AG04449 (cell line): ENCODE measurements at regions of chr2 and their contacts with region 1.

Region 1: GRCh38 chr2:151437630-151438029 is 27.9 kb downstream of the RIF1 start:
- DNase-seq: no peak
- H3K4me3 ChIP-seq: no peak overlapping the region
- CTCF ChIP-seq: no peak

Region 2: GRCh38 chr2:151230627-151231140 is 206.9 kb before region 1 on chr2:
- CTCF ChIA-PET with region 1: no interaction called
- POLR2A ChIA-PET with region 1: no interaction called
- DNase-seq: no peak
- H3K4me3 ChIP-seq: no peak overlapping the region
- CTCF ChIP-seq: no peak

Region 3: GRCh38 chr2:151261231-151261976 is 176.2 kb before region 1 on chr2 and contains the start of gene RBM43:
- CTCF ChIA-PET with region 1: interaction called, 14 read pairs
- POLR2A ChIA-PET with region 1: no interaction called
- DNase-seq: peak; percentile 44
- H3K4me3 ChIP-seq: peak within 1 kb of the TSS; percentile 79
- CTCF ChIP-seq: no peak

Region 4: GRCh38 chr2:151417650-151418049 is 20.0 kb before region 1 on chr2:
- CTCF ChIA-PET with region 1: interaction called, 35 read pairs
- POLR2A ChIA-PET with region 1: no interaction called
- DNase-seq: no peak
- H3K4me3 ChIP-seq: no peak overlapping the region
- CTCF ChIP-seq: no peak

Region 5: DNA sequence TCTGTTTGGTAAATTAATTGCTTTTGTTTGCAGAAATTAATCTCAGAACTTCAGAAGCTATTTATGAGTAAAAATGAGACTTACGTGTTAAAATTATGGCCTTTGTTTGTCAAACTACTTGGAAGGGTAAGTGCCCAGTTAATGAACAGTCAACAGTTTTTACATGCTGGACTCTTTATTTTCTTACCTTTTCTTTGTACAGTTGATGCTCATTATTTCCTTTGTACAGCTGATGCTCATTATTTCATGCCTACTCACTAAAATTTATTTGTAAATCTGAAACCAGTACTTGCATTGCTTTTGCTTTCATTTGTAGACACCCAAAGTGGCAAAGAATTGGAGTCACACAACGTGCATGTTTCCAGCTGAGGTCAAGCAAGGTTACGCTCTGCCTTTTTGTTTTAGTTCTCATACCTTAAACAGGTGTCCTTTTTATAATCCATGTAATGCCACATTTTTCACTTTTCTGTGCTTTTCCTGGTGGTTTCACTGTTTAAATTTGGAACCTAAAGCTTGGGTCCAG is 14.7 kb before region 1 on chr2:
- CTCF ChIA-PET with region 1: interaction called, 36 read pairs
- POLR2A ChIA-PET with region 1: no interaction called
- DNase-seq: no peak
- H3K4me3 ChIP-seq: no peak overlapping the region
- CTCF ChIP-seq: no peak

Region 6: GRCh38 chr2:151459358-151459757 is 21.7 kb after region 1 on chr2:
- CTCF ChIA-PET with region 1: interaction called, 13 read pairs
- POLR2A ChIA-PET with region 1: no interaction called
- DNase-seq: no peak
- H3K4me3 ChIP-seq: no peak overlapping the region
- CTCF ChIP-seq: no peak

Region 7: DNA sequence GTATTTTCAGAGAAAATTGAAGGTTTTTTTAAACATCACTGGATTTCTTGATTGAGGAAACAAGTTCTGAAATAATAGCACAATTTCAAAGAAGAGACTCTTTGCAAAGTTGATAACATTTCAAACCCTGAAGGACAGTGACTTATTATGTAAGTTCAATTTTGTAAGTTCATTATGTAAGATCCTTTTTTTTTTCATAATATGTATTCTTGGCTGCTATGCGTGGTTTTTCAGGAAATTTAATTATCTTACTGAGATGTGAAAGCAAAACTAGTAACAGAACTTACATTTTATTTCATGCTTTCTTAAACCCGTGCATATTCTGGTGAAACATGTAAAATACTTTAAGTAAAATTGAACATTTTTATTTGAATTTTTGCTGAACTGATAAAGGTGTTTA is 37.4 kb after region 1 on chr2:
- CTCF ChIA-PET with region 1: interaction called, 14 read pairs
- POLR2A ChIA-PET with region 1: no interaction called
- DNase-seq: no peak
- H3K4me3 ChIP-seq: no peak overlapping the region
- CTCF ChIP-seq: no peak